Right cardiac atrium (tissue), 5 donors: ENCODE measurements at regions of chr19 and their contacts with region 1.

Region 1: DNA sequence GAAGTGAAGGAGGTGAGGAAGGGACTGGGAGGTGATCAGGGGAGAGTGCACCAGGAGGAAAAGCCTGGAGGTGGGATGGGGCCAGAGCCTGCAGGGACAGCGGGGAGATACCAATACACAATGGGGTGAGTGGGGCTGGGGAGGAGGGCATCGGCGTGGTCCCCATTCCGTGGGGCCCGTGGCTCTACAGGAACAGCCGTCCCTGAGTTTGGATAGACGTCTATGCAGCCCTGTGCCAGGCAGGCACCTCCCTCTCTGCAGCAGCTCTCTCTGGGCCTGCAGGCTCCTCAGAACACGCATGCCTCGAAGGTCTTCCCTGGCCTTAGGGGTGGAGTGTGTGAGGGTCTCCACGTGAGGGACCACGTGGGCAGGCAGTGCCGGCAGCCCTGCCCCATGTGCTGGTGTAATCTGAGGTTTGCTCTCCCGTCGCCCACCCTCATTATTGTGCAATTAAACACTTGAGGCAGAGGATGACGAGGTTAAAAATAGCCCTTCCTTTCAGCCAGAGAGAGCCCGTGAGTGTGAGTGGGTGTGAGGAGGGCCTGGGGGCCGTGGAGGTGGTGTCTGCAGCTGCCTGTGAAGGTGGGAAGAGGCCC is 16.5 kb downstream of the C2CD4C start:
- DNase-seq: peak in 1 of 3 donors; percentile 56
- ATAC-seq: peak; percentile 66
- H3K4me3 ChIP-seq: no peak overlapping the region
- H3K27ac ChIP-seq: no peak overlapping the region
- H3K4me1 ChIP-seq: no peaks in the 10 kb centered on the region
- H3K27me3 ChIP-seq: no peaks in the 10 kb centered on the region

Region 2: GRCh38 chr19:480016-480855 is 87.8 kb after region 1 on chr19:
- intact Hi-C with region 1: loop called in 2 of 4 experiments (anchors 5 to 10 kb)
- DNase-seq: peak; percentile 90 to 96 (median 94)
- ATAC-seq: peak; percentile 91 to 92
- H3K4me3 ChIP-seq: peak overlapping the region; percentile 11
- H3K27ac ChIP-seq: peak overlapping the region; percentile 63
- H3K4me1 ChIP-seq: no peaks in the 10 kb centered on the region
- H3K27me3 ChIP-seq: no peaks in the 10 kb centered on the region

Region 3: GRCh38 chr19:488505-489417 is 96.3 kb after region 1 on chr19:
- intact Hi-C with region 1: loop called in 2 of 4 experiments (anchors 5 to 10 kb)
- DNase-seq: peak; percentile 98 to 100 (median 99)
- ATAC-seq: peak; percentile 97
- H3K4me3 ChIP-seq: peak overlapping the region; percentile 93
- H3K27ac ChIP-seq: peak overlapping the region; percentile 92
- H3K4me1 ChIP-seq: no peaks in the 10 kb centered on the region
- H3K27me3 ChIP-seq: no peaks in the 10 kb centered on the region

Region 4: GRCh38 chr19:633068-633785 is 240.8 kb after region 1 on chr19 and contains the start of gene POLRMT:
- intact Hi-C with region 1: no loop called
- DNase-seq: peak; percentile 99 to 100 (median 99)
- ATAC-seq: peak; percentile 96 to 98
- H3K4me3 ChIP-seq: peak within 1 kb of the TSS; percentile 83
- H3K27ac ChIP-seq: peak within 1 kb of the TSS; percentile 53
- H3K4me1 ChIP-seq: peaks cover 3% of the 10 kb centered on the region
- H3K27me3 ChIP-seq: no peaks in the 10 kb centered on the region
- total RNA-seq, gene POLRMT: 36.1 to 46.4 (median 45.1) TPM